IMR-90 (cell line): ENCODE measurements at regions of chr12 and their contacts with region 1.

Region 1: GRCh38 chr12:44127966-44128710 is 292.3 kb downstream of the TMEM117 start:
- DNase-seq: no peak
- ATAC-seq: peak; percentile 40
- H3K4me3 ChIP-seq: no peak overlapping the region
- H3K27ac ChIP-seq: no peak overlapping the region
- H3K4me1 ChIP-seq: no peaks in the 10 kb centered on the region
- H3K27me3 ChIP-seq: no peaks in the 10 kb centered on the region
- CTCF ChIP-seq: no peak
- POLR2A ChIP-seq: no peak
- RAD21 ChIP-seq: no peak

Region 2: GRCh38 chr12:44031472-44032185 is 96.5 kb before region 1 on chr12:
- CTCF ChIA-PET with region 1: no interaction called
- POLR2A ChIA-PET with region 1: no interaction called
- dilution Hi-C with region 1: no loop called
- in situ Hi-C with region 1: no loop called
- intact Hi-C with region 1: no loop called
- DNase-seq: peak; percentile 28
- ATAC-seq: no peak
- H3K4me3 ChIP-seq: no peak overlapping the region
- H3K27ac ChIP-seq: no peak overlapping the region
- H3K4me1 ChIP-seq: no peaks in the 10 kb centered on the region
- H3K27me3 ChIP-seq: no peaks in the 10 kb centered on the region
- CTCF ChIP-seq: no peak
- POLR2A ChIP-seq: no peak
- RAD21 ChIP-seq: no peak

Region 3: DNA sequence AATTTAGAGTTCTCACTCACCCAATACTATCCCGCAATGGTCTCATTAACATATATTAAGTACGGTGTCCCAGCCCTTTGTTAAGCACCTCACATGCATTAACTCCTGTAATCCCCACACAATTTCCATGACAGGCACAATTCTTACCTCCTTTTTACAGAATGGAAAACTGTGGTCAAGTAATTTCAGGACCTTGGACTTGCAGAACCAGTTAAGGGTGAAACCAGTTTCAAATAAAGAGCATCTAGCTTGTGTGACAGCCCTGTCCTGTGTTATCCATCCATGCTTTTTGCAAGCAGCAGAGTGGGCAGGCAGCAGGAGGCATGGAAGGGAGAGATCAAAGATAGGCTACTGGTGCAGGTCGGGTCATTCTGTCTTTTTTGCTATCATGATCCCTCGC is 277.2 kb after region 1 on chr12:
- CTCF ChIA-PET with region 1: no interaction called
- POLR2A ChIA-PET with region 1: no interaction called
- dilution Hi-C with region 1: no loop called
- in situ Hi-C with region 1: no loop called
- intact Hi-C with region 1: loop called (anchors 10 kb)
- DNase-seq: no peak
- ATAC-seq: no peak
- H3K4me3 ChIP-seq: no peak overlapping the region
- H3K27ac ChIP-seq: no peak overlapping the region
- H3K4me1 ChIP-seq: no peaks in the 10 kb centered on the region
- H3K27me3 ChIP-seq: no peaks in the 10 kb centered on the region
- CTCF ChIP-seq: no peak
- POLR2A ChIP-seq: no peak
- RAD21 ChIP-seq: no peak